ENCODE measurements at regions of chr20 and their contacts with region 1.

Region 1: GRCh38 chr20:45293041-45294002 is 13.3 kb upstream of the RBPJL start:
- DNase-seq: peak; percentile 77 to 97
- H3K4me3 ChIP-seq: peak overlapping the region; percentile 35
- CTCF ChIP-seq: peak in 1 of 3 donors; percentile 59
- POLR2A ChIP-seq: no peak

Region 2: GRCh38 chr20:45011108-45011526 is 282.2 kb before region 1 on chr20:
- intact Hi-C with region 1: loop called (anchors 10 kb)
- DNase-seq: peak in 1 of 2 donors; percentile 65
- H3K4me3 ChIP-seq: no peak overlapping the region
- CTCF ChIP-seq: peak in 1 of 3 donors; percentile 13
- POLR2A ChIP-seq: no peak